ENCODE measurements at regions of chr16 and their contacts with region 1.

Region 1: GRCh38 chr16:11546608-11547061 is 40.1 kb downstream of the LITAF start:
- DNase-seq: no peak
- H3K4me3 ChIP-seq: peak overlapping the region in 6 of 59 donors; percentile 8 to 44 (median 26)
- H3K27ac ChIP-seq: peak overlapping the region; percentile 73 to 98 (median 93)
- H3K27me3 ChIP-seq: no peaks in the 10 kb centered on the region
- CTCF ChIP-seq: no peak

Region 2: DNA sequence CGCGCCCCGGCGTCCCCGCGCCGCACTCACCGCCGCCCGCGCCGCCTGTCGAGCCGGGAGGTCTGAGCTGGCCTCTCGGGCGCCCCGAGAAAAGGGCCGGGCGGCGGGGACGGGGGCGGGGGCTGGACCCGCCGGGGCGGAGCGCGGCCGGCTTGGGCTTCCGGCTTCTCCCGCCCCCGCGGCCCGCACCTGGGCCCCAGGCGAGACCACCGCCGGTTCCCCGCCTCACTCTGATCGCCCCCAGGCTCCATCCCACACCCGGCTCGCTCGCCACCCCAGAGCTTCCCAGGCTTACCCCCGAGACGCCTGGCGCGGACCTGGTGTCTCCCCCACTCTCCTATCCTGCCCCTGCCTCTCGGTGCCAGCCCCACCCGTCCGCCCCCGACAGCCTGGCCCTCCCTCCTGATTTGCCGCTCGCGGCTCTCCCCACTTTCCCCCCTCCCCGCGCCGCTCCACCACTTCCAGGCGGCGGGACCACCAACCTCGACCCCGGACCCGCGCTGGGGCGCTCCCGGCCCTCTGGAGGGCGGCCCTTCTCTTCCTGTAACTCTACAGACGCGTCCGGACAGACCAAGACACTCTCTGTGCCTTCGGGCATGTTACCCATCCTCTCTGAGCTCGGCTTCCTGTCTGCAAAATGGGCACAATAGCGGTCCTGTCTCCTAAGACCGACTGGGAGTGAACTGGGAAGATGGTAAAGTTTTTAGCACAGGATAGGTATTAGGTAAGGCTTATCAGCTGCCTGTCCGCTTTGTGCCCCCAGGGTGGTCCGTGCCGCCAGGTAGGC is 40.4 kb after region 1 on chr16 and contains the start of gene LITAF:
- intact Hi-C with region 1: loop called in 1 of 2 experiments (anchors 2 kb)
- DNase-seq: peak in 7 of 10 donors; percentile 23 to 73 (median 52)
- H3K4me3 ChIP-seq: peak within 1 kb of the TSS; percentile 50 to 85 (median 68)
- H3K27ac ChIP-seq: peak within 1 kb of the TSS; percentile 57 to 96 (median 88)
- H3K27me3 ChIP-seq: peaks cover 0 to 21% (median 0%) of the 10 kb centered on the region in 45 donors
- CTCF ChIP-seq: peak in 4 of 56 donors; percentile 0 to 30 (median 14)
- total RNA-seq, gene LITAF: 14.7 to 172 (median 49.8) TPM

Measured in dorsolateral prefrontal cortex (tissue), 120 donors.